Endothelial cell of umbilical vein (primary cell): ENCODE measurements at regions of chr5 and their contacts with region 1.

Region 1: DNA sequence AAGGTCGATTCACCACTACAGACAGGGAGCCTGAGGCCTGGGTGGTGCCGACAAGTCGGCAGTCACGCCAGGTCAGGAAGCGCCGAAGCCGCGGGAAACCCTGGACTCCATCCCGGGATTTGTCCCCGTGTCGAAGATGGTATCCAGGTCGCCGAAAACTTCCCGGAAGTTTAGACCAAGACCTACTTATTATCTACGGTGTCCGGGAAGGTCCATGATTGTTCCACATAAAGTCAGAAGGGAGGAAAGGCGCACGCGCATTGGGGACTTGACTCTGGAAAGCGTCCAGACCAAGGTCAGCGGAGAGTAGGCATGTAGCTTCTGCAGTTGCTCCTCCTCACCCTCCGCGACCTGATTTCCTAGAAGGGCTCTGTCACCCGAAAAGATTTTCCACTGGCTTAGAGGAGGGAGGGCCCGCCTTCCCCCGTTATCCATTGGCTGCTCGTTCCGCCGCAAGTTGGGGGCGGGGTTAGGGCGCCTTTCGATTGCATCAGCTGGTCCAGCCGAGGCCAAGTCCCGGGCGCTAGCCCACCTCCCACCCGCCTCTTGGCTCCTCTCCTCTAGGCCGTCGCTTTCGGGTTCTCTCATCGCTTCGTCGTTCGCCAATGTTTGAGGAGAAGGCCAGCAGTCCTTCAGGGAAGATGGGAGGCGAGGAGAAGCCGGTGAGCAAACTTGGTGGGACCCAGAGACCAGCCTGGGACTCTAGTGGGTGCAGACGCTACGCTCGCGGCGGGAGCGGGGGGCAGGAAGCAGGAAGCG is at the start of gene TARS1:
- DNase-seq: peak; percentile 100
- H3K4me3 ChIP-seq: peak within 1 kb of the TSS; percentile 68 to 93 (median 76)
- H3K27ac ChIP-seq: peak within 1 kb of the TSS; percentile 73
- H3K4me1 ChIP-seq: peaks cover 22% of the 10 kb centered on the region
- H3K27me3 ChIP-seq: no peaks in the 10 kb centered on the region
- CTCF ChIP-seq: no peak
- POLR2A ChIP-seq: peak; percentile 92
- total RNA-seq, gene TARS1: 175 and 184 TPM in 2 replicates

Region 2: GRCh38 chr5:31453522-31453921 is 1987.1 kb before region 1 on chr5:
- CTCF ChIA-PET with region 1: no interaction called
- POLR2A ChIA-PET with region 1: no interaction called
- dilution Hi-C with region 1: no loop called
- intact Hi-C with region 1: loop called (anchors 5 kb)
- DNase-seq: no peak
- H3K4me3 ChIP-seq: no peak overlapping the region
- H3K27ac ChIP-seq: no peak overlapping the region
- H3K4me1 ChIP-seq: no peaks in the 10 kb centered on the region
- H3K27me3 ChIP-seq: no peaks in the 10 kb centered on the region
- CTCF ChIP-seq: no peak
- POLR2A ChIP-seq: no peak

Region 3: GRCh38 chr5:32174011-32174870 is 1266.4 kb before region 1 on chr5 and contains the start of gene GOLPH3:
- CTCF ChIA-PET with region 1: no interaction called
- POLR2A ChIA-PET with region 1: no interaction called
- dilution Hi-C with region 1: no loop called
- intact Hi-C with region 1: loop called (anchors 2 kb)
- DNase-seq: peak; percentile 82
- H3K4me3 ChIP-seq: peak within 1 kb of the TSS; percentile 89 to 99 (median 96)
- H3K27ac ChIP-seq: peak within 1 kb of the TSS; percentile 91
- H3K4me1 ChIP-seq: peaks cover 17% of the 10 kb centered on the region
- H3K27me3 ChIP-seq: peaks cover 0 to 2% of the 10 kb centered on the region in 2 experiments
- CTCF ChIP-seq: no peak
- POLR2A ChIP-seq: peak; percentile 97
- total RNA-seq, gene GOLPH3: 67.2 and 70.2 TPM in 2 replicates

Region 4: DNA sequence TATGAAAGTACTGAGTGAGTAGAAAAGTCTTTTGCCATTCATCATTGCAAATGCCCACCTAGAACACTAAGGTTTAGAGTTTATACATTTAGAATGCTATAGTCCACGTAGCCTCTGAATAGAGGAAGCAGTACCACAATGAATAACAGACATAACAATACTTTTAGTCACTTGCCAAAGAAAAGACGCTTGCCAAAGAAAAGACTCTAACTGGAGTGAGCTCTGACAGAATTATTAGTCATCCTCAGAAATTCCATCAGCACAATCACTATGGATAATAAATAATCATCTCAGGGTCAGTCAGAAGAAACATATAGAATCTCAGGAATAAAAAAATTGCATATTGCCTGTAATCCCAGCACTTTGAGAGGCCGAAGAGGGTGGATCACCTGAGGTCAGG is 168.4 kb before region 1 on chr5:
- CTCF ChIA-PET with region 1: interaction called, 4 read pairs
- POLR2A ChIA-PET with region 1: no interaction called
- dilution Hi-C with region 1: no loop called
- intact Hi-C with region 1: loop called (anchors 2 kb)
- DNase-seq: peak; percentile 94
- H3K4me3 ChIP-seq: peak overlapping the region in 1 of 3 experiments; percentile 31
- H3K27ac ChIP-seq: peak overlapping the region; percentile 90
- H3K4me1 ChIP-seq: peaks cover 38% of the 10 kb centered on the region
- H3K27me3 ChIP-seq: no peaks in the 10 kb centered on the region
- CTCF ChIP-seq: no peak
- POLR2A ChIP-seq: no peak

Region 5: DNA sequence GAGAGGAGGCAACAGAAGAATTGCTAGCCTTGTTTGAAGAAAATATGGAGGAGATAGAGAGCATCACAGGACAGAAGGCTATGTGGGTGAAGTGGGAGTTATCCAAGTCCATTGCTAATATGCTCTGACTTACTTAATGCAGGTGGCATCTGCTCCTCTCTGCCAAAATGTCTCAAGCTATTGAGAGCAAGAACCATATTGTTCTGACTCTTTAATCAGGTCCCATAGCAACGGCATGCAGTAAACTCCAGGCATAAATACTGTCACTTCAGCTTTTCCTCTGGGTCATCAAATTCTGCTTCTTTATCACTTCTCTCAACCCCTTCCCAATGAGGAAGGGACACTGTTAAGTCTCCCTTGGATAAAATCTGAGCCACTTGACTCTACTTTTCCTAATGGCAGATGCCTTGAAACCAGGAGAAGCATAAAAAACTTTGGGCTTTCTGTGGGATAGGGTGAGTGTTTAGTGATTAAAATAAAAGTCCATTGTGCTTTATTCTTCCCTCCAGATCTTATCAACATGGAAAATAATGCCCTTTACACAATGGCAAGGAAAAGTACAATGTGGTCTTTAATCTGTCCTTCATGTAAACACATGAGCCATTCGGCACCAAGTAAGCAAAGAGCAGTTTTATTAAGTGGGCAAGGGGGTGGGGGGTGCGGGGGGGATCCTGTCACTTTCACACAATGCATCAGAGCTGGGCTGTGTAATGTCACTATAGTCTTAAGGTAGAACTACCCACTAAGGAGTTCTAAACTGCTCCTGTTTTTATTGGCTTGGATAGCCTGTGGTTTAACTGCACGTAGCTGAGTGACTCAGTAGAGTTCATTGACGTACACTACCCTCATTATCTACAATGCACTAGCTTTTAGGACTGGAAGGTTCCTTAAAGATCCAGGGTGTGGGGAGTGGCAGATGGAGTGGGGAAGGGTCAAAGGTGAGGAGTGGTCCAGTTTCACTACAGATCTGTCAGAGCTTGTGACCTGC is 70.9 kb before region 1 on chr5:
- CTCF ChIA-PET with region 1: interaction called, 5 read pairs
- POLR2A ChIA-PET with region 1: no interaction called
- dilution Hi-C with region 1: no loop called
- intact Hi-C with region 1: loop called (anchors 1 kb)
- DNase-seq: peak; percentile 92
- H3K4me3 ChIP-seq: no peak overlapping the region
- H3K27ac ChIP-seq: peak overlapping the region; percentile 69
- H3K4me1 ChIP-seq: peaks cover 20% of the 10 kb centered on the region
- H3K27me3 ChIP-seq: no peaks in the 10 kb centered on the region
- CTCF ChIP-seq: no peak
- POLR2A ChIP-seq: no peak

Region 6: GRCh38 chr5:33936004-33936380 is 495.3 kb after region 1 on chr5:
- CTCF ChIA-PET with region 1: interaction called, 80 read pairs
- POLR2A ChIA-PET with region 1: no interaction called
- dilution Hi-C with region 1: no loop called
- intact Hi-C with region 1: no loop called
- DNase-seq: peak; percentile 46
- H3K4me3 ChIP-seq: peak overlapping the region in 1 of 3 experiments; percentile 3
- H3K27ac ChIP-seq: no peak overlapping the region
- H3K4me1 ChIP-seq: peaks cover 14% of the 10 kb centered on the region
- H3K27me3 ChIP-seq: peaks cover 40 to 49% of the 10 kb centered on the region in 2 experiments
- CTCF ChIP-seq: peak in 1 of 2 donors; percentile 17
- POLR2A ChIP-seq: no peak